CD8-positive, alpha-beta T cell (primary cell): ENCODE measurements at regions of chr16 and their contacts with region 1.

Region 1: DNA sequence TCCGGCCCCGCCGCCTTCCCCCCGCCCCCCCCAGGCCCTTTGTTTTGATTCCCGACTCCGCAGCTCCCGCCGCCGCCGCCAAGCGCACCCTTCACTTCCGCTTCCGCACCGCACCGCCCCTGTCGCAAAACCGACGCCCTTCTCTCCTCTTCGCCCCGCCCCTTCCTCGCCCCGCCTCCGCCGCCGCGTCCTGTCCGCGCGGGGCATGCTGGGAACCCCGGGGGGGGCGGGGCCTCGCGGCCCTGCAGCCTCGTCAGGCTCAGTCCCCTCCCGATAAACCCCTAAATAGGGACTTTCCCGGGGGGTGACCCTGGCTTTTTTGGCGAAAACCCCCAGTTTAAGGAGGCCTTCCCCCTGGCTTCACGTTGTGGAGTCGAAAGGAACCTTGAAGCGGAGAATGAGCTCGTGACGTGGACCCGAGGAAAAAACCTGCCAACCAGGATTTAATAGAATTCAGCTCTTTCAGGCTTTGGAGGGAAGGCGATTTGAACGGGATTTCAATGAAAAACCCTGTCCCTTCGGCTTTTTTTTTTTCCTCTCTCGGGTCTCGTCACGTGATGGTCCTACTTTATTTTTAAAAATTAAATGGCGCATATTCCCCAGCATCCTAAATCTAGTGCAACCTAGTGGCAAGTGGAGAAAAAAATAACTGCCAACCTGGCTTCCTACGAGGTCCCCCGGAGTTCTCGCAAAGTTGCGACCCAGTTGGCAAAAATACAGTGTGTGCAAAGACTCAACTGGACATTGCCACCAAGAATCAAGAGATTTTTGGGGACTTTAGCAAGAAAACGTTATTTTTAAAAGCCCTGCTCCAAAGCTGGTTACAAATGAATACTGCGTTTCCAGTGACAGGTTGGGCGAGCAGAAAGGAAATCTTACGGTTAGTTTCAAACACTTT is at the start of gene MARF1:
- DNase-seq: peak; percentile 98 to 100 (median 100)
- ATAC-seq: peak; percentile 81
- H3K4me3 ChIP-seq: peak within 1 kb of the TSS; percentile 94 to 95
- H3K4me3 Mint-ChIP-seq: peak within 1 kb of the TSS; percentile 94
- H3K27ac ChIP-seq: peak within 1 kb of the TSS; percentile 98 to 100
- H3K27ac Mint-ChIP-seq: peak within 1 kb of the TSS; percentile 99
- H3K4me1 ChIP-seq: peaks cover 46% of the 10 kb centered on the region
- H3K4me1 Mint-ChIP-seq: peaks cover 47% of the 10 kb centered on the region
- H3K27me3 ChIP-seq: peaks cover 0 to 2% of the 10 kb centered on the region in 2 experiments
- H3K27me3 Mint-ChIP-seq: no peaks in the 10 kb centered on the region
- CTCF ChIP-seq: peak; percentile 26
- total RNA-seq, gene MARF1: 169 to 176 TPM

Region 2: DNA sequence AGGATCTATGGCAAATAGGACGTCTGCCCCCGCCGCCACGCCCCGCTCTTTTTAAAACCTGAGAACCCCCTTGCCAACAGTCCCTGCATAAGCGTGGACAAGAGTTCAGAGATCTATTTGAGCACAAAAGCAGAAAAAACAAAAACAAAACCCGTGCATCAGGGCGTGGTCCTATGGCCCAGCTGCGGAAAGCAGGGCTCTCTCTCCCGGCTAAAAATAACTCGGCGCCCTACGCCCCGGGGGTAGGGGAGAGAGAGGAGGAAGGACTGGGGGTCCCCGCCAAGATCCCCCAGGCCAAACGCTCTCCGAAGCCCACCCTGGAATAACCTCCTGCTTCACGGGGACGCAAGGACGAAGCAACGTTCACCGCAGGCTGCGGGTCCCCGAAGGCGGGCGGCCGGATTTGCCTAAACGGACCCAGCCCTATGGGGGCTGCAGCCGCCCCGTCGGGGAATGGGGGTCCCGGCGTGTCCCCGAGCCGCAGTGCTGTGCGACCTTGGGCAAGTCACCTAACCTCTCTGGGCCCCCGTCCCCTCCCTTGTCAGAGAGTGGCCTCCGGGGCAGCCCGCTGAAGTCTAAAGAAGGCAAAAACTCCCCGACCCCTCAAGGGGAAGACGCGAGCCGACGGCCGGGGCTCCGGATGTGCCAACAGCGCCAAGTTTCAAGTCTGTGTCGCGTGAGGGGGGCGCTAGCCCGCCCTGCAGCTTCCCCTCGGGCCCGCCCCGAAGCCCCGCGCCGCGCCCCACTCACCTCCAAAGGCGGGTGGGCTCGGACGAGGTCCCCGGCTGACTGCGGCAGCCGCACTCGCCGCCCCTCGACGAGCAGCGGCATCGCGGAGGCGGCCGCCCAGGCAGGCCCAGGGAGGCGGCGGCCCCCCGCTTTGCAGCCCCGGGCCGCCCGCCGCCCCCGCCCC is 587.9 kb before region 1 on chr16:
- CTCF ChIA-PET with region 1: no interaction called
- POLR2A ChIA-PET with region 1: no interaction called
- intact Hi-C with region 1: loop called in 1 of 2 experiments (anchors 5 kb)
- DNase-seq: peak in 6 of 9 experiments; percentile 62 to 90 (median 82)
- ATAC-seq: peak; percentile 75
- H3K4me3 ChIP-seq: peak overlapping the region; percentile 86 to 94
- H3K4me3 Mint-ChIP-seq: peak overlapping the region; percentile 87
- H3K27ac ChIP-seq: peak overlapping the region; percentile 67 to 68
- H3K27ac Mint-ChIP-seq: peak overlapping the region; percentile 70
- H3K4me1 ChIP-seq: peaks cover 14% of the 10 kb centered on the region
- H3K4me1 Mint-ChIP-seq: peaks cover 16% of the 10 kb centered on the region
- H3K27me3 ChIP-seq: no peaks in the 10 kb centered on the region
- H3K27me3 Mint-ChIP-seq: no peaks in the 10 kb centered on the region
- CTCF ChIP-seq: peak; percentile 32

Region 3: DNA sequence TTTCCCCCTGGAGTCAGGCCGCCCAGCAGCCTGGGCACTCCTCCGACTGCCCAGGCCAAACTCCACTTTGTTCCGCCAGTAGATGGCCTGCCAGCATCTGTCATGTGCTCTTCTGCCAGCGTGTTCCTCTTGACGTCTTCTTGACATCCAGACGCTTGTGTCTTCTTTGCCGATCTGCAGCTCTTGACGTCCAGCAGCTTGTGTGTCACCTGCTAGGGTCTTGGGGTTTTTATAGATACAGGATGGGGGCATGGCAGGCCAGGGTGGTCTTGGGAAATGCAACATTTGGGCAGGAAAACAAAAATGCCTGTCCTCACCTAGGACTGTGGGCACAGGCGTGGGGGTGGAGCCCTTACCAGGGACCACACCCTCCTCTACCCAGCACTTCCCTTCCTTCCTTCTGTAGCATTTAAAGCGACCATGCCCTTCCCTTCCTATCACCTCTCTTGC is 120.2 kb before region 1 on chr16:
- CTCF ChIA-PET with region 1: no interaction called
- POLR2A ChIA-PET with region 1: no interaction called
- intact Hi-C with region 1: loop called in 1 of 2 experiments (anchors 1 kb)
- DNase-seq: peak in 2 of 9 experiments; percentile 16 to 54
- ATAC-seq: no peak
- H3K4me3 ChIP-seq: no peak overlapping the region
- H3K4me3 Mint-ChIP-seq: no peak overlapping the region
- H3K27ac ChIP-seq: no peak overlapping the region
- H3K27ac Mint-ChIP-seq: no peak overlapping the region
- H3K4me1 ChIP-seq: peaks cover 12% of the 10 kb centered on the region
- H3K4me1 Mint-ChIP-seq: peaks cover 15% of the 10 kb centered on the region
- H3K27me3 ChIP-seq: no peaks in the 10 kb centered on the region
- H3K27me3 Mint-ChIP-seq: no peaks in the 10 kb centered on the region
- CTCF ChIP-seq: no peak

Region 4: DNA sequence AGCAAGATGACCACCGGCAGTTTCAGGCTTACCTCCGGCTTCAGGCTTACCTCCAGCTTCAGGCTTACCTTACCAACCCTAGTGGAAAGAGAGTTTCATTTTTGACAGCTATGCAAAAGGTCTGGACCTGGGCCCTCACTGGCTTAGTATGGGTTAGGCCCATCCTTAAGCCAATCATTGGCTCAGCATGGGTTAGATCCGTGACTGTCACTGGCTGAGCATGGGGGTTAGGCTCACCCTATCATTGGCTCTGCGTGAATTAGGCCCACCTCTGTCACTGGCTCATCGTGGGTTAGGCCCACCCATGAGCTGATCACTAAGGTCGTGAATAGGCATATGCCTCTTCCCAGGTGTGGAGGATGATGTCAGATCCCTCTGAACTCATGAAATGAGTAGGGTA is 14.9 kb after region 1 on chr16:
- CTCF ChIA-PET with region 1: interaction called, 15 read pairs
- POLR2A ChIA-PET with region 1: interaction called, 26 read pairs
- intact Hi-C with region 1: no loop called
- DNase-seq: no peak
- ATAC-seq: no peak
- H3K4me3 ChIP-seq: no peak overlapping the region
- H3K4me3 Mint-ChIP-seq: no peak overlapping the region
- H3K27ac ChIP-seq: peak overlapping the region in 1 of 2 experiments; percentile 44
- H3K27ac Mint-ChIP-seq: peak overlapping the region; percentile 96
- H3K4me1 ChIP-seq: peaks cover 35% of the 10 kb centered on the region
- H3K4me1 Mint-ChIP-seq: peaks cover 74% of the 10 kb centered on the region
- H3K27me3 ChIP-seq: no peaks in the 10 kb centered on the region
- H3K27me3 Mint-ChIP-seq: no peaks in the 10 kb centered on the region
- CTCF ChIP-seq: no peak

Region 5: DNA sequence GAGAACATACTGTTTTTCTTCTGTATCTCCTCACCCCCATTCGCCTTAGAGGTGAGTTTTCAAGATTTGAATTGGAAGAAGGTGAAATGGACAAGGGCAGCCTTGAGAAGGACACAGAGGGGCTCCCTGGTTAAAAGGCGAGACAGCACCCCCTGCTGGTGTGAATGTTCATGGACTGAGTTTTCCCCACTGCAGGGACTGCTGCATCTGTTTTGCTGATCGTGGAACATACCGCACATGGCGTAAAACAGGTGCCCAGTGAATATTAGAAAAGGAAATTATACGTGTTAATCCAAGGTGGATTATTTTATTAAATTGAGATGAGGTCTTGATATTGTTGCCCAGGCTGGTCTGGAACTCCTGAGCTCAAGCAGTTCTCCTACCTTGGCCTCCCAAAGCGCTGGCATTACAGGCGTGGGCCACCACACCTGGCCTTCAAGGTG is 61.3 kb after region 1 on chr16:
- CTCF ChIA-PET with region 1: interaction called, 4 read pairs
- POLR2A ChIA-PET with region 1: no interaction called
- intact Hi-C with region 1: loop called in 1 of 2 experiments (anchors 5 kb)
- DNase-seq: peak; percentile 56 to 87 (median 73)
- ATAC-seq: peak; percentile 82
- H3K4me3 ChIP-seq: no peak overlapping the region
- H3K4me3 Mint-ChIP-seq: no peak overlapping the region
- H3K27ac ChIP-seq: no peak overlapping the region
- H3K27ac Mint-ChIP-seq: peak overlapping the region; percentile 22
- H3K4me1 ChIP-seq: no peaks in the 10 kb centered on the region
- H3K4me1 Mint-ChIP-seq: peaks cover 16% of the 10 kb centered on the region
- H3K27me3 ChIP-seq: no peaks in the 10 kb centered on the region
- H3K27me3 Mint-ChIP-seq: no peaks in the 10 kb centered on the region
- CTCF ChIP-seq: peak; percentile 88

Region 6: DNA sequence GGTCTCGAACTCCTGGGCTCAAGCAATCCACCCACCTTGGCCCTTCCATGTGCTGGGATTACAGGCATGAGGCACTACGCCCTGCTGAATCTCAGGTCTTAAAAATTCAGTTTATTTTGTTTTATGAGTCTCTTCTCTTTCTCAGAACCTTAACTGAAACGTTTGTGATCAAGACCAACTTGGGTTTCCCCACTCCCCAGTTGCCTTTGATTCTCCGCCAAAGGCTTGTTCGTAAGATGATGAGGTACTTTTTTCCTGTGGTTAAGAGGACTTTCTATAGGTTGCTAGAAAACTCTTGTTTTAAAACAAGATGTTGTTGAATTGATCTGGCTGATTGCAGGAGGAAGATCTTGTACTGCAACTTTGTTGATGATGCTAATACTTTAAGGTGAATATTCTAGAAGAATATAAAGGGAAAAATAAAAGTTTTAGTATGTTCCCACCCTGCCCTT is 317.8 kb after region 1 on chr16:
- CTCF ChIA-PET with region 1: no interaction called
- POLR2A ChIA-PET with region 1: no interaction called
- intact Hi-C with region 1: loop called in 1 of 2 experiments (anchors 2 kb)
- DNase-seq: peak; percentile 34 to 95 (median 69)
- ATAC-seq: peak; percentile 77
- H3K4me3 ChIP-seq: peak overlapping the region; percentile 38 to 46
- H3K4me3 Mint-ChIP-seq: peak overlapping the region; percentile 81
- H3K27ac ChIP-seq: peak overlapping the region; percentile 80 to 92
- H3K27ac Mint-ChIP-seq: peak overlapping the region; percentile 95
- H3K4me1 ChIP-seq: peaks cover 58% of the 10 kb centered on the region
- H3K4me1 Mint-ChIP-seq: peaks cover 79% of the 10 kb centered on the region
- H3K27me3 ChIP-seq: no peaks in the 10 kb centered on the region
- H3K27me3 Mint-ChIP-seq: no peaks in the 10 kb centered on the region
- CTCF ChIP-seq: no peak